ENCODE measurements at regions of chr3 and their contacts with region 1.

Region 1: GRCh38 chr3:49802719-49803464 is at the start of gene INKA1:
- DNase-seq: peak; percentile 92
- H3K4me3 Mint-ChIP-seq: peak within 1 kb of the TSS; percentile 88
- H3K27ac Mint-ChIP-seq: peak within 1 kb of the TSS; percentile 82
- H3K4me1 Mint-ChIP-seq: peaks cover 37% of the 10 kb centered on the region
- H3K27me3 Mint-ChIP-seq: peaks cover 8% of the 10 kb centered on the region
- total RNA-seq, gene INKA1: 1.0 to 1.2 TPM

Region 2: DNA sequence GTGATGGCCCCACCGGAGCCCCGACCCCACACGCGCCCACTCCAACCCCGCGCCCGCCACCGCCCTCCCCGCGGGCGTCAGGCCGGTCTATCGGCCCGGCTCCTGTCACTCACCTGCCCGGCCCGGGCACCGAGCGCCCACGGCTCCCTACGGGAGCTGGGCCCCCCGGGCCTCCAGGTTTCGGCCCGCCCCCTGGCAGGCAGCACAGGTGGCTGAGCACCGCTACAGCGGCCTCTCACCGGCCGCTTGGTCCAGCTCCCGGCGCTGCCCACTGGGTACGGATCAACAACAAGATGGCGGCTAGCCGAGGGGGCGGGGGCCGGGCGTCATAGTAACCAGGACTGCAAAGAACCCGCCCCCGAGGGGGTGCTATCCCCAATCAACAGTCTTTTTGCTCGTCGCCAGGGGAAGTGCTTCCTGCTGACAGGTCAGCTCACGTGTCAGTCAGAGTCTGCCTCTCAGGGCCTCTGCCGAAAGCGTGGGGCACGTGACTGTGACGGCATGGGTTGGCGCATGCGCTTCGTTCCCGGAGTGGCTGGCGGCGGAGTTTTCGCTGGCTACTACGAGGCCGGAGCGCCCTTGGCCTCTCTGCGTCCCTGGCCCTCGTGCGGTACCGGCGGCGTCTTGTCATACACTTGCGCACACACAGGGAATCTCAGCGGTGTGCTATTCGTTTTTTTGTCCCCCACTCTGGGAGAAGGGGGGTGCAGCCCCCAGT is 16.5 kb before region 1 on chr3 and contains the start of gene IP6K1:
- CTCF ChIA-PET with region 1: interaction called, 34 read pairs
- POLR2A ChIA-PET with region 1: interaction called, 7 read pairs
- intact Hi-C with region 1: loop called (anchors 1 kb)
- DNase-seq: peak; percentile 100
- H3K4me3 Mint-ChIP-seq: peak within 1 kb of the TSS; percentile 83
- H3K27ac Mint-ChIP-seq: peak within 1 kb of the TSS; percentile 89
- H3K4me1 Mint-ChIP-seq: peaks cover 21% of the 10 kb centered on the region
- H3K27me3 Mint-ChIP-seq: no peaks in the 10 kb centered on the region
- total RNA-seq, gene IP6K1: 28.8 to 29.3 TPM

Region 3: GRCh38 chr3:49826016-49826415 is 23.1 kb after region 1 on chr3:
- CTCF ChIA-PET with region 1: interaction called, 13 read pairs
- POLR2A ChIA-PET with region 1: interaction called, 3 read pairs
- intact Hi-C with region 1: no loop called
- DNase-seq: no peak
- H3K4me3 Mint-ChIP-seq: no peak overlapping the region
- H3K27ac Mint-ChIP-seq: no peak overlapping the region
- H3K4me1 Mint-ChIP-seq: no peaks in the 10 kb centered on the region
- H3K27me3 Mint-ChIP-seq: no peaks in the 10 kb centered on the region

Region 4: GRCh38 chr3:49906004-49906743 is 103.3 kb after region 1 on chr3:
- CTCF ChIA-PET with region 1: interaction called, 23 read pairs
- POLR2A ChIA-PET with region 1: no interaction called
- intact Hi-C with region 1: loop called (anchors 1 kb)
- DNase-seq: peak; percentile 69
- H3K4me3 Mint-ChIP-seq: peak overlapping the region; percentile 18
- H3K27ac Mint-ChIP-seq: peak overlapping the region; percentile 83
- H3K4me1 Mint-ChIP-seq: peaks cover 22% of the 10 kb centered on the region
- H3K27me3 Mint-ChIP-seq: no peaks in the 10 kb centered on the region

Measured in activated CD4-positive, alpha-beta memory T cell treated with anti-CD3 and anti-CD28 coated beads for 36 hours (primary cell).